Naive thymus-derived CD4-positive, alpha-beta T cell (primary cell): ENCODE measurements at regions of chr5 and their contacts with region 1.

Region 1: DNA sequence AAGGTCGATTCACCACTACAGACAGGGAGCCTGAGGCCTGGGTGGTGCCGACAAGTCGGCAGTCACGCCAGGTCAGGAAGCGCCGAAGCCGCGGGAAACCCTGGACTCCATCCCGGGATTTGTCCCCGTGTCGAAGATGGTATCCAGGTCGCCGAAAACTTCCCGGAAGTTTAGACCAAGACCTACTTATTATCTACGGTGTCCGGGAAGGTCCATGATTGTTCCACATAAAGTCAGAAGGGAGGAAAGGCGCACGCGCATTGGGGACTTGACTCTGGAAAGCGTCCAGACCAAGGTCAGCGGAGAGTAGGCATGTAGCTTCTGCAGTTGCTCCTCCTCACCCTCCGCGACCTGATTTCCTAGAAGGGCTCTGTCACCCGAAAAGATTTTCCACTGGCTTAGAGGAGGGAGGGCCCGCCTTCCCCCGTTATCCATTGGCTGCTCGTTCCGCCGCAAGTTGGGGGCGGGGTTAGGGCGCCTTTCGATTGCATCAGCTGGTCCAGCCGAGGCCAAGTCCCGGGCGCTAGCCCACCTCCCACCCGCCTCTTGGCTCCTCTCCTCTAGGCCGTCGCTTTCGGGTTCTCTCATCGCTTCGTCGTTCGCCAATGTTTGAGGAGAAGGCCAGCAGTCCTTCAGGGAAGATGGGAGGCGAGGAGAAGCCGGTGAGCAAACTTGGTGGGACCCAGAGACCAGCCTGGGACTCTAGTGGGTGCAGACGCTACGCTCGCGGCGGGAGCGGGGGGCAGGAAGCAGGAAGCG is at the start of gene TARS1:
- DNase-seq: peak; percentile 80 to 94 (median 91)
- ATAC-seq: peak; percentile 94
- H3K4me3 ChIP-seq: peak within 1 kb of the TSS; percentile 96
- H3K4me3 Mint-ChIP-seq: no peak within 1 kb of the TSS
- H3K27ac ChIP-seq: peak within 1 kb of the TSS; percentile 90
- H3K27ac Mint-ChIP-seq: no peak within 1 kb of the TSS
- H3K4me1 ChIP-seq: peaks cover 15 to 16% of the 10 kb centered on the region in 2 donors
- H3K4me1 Mint-ChIP-seq: peaks cover 16 to 35% (median 29%) of the 10 kb centered on the region in 7 donors
- H3K27me3 ChIP-seq: no peaks in the 10 kb centered on the region
- H3K27me3 Mint-ChIP-seq: no peaks in the 10 kb centered on the region
- total RNA-seq, gene TARS1: 29.7 to 153 (median 87.0) TPM

Region 2: DNA sequence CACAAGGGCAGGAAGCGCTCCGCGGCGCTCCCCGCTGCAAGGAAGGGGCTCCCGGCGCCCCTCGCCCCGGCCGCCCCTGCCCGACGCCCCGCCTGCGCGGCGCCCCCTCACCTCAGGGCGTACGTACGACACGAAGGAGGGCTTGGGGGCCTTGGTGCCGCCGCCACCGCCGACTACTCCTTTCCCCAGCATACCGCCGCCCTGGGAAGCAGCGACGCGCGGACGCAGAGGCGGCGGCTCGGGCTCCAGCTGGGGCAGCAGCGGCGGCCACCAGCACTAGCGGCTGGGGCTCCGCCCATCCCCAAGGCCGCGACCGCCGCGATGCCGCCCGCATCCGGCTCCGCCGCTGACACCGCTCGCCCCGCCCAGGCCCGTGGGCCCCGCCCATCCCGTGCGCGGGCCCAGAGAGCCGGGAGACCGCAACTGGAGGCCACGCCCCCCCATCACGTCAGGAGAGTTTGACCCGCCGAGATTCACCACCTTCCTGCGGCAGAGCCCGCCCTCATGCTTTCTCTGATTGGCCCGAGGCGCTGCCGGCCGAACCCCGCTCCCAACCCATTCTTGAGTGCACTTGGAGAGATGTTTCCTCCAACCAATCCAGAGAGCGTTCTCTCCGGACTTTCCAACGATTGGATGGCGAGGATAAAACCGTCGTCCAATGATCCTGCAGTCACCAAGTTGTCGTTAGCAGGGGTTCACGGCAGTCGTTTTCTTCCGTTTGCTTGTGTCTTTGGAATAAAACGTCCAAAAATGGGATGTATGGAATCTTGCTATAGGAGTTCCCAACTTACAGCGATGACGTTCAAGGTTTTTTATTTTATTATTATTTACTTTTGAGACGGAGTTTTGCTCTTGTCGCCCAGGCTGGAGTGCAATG is 1127.8 kb before region 1 on chr5 and contains the start of gene MTMR12:
- CTCF ChIA-PET with region 1: no interaction called
- POLR2A ChIA-PET with region 1: no interaction called
- intact Hi-C with region 1: loop called (anchors 1 to 2 kb)
- DNase-seq: peak; percentile 99 to 100 (median 100)
- ATAC-seq: peak; percentile 96
- H3K4me3 ChIP-seq: peak within 1 kb of the TSS; percentile 72
- H3K4me3 Mint-ChIP-seq: peak within 1 kb of the TSS; percentile 89 to 98 (median 92)
- H3K27ac ChIP-seq: peak within 1 kb of the TSS; percentile 79
- H3K27ac Mint-ChIP-seq: peak within 1 kb of the TSS; percentile 88 to 98 (median 95)
- H3K4me1 ChIP-seq: peaks cover 9 to 14% of the 10 kb centered on the region in 2 donors
- H3K4me1 Mint-ChIP-seq: peaks cover 30 to 43% (median 38%) of the 10 kb centered on the region in 7 donors
- H3K27me3 ChIP-seq: no peaks in the 10 kb centered on the region
- H3K27me3 Mint-ChIP-seq: no peaks in the 10 kb centered on the region
- total RNA-seq, gene MTMR12: 19.0 to 28.2 (median 24.0) TPM

Region 3: DNA sequence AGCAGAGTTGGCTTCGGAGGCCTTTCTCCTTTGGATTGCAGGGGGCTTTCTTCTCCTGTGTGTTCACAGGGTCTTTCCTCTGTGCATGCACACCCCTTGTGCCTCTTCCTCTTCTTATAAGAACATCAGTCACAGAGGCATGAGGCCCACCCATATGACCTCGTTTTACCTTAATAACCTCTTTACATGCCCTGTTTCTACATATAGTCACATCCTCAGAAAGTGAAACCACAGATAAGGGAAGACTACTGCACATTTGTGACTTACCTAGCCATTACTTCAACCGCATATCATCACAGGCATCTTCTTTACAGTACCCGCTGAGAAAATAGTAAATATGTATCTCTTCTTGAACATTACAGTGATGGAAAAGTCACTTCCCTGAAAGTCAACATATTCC is 204.8 kb before region 1 on chr5:
- CTCF ChIA-PET with region 1: no interaction called
- POLR2A ChIA-PET with region 1: no interaction called
- intact Hi-C with region 1: loop called in 1 of 2 experiments (anchors 10 kb)
- DNase-seq: no peak
- ATAC-seq: no peak
- H3K4me3 ChIP-seq: no peak overlapping the region
- H3K4me3 Mint-ChIP-seq: peak overlapping the region in 6 of 10 donors; percentile 19 to 57 (median 40)
- H3K27ac ChIP-seq: no peak overlapping the region
- H3K27ac Mint-ChIP-seq: peak overlapping the region in 2 of 9 donors; percentile 2 to 63
- H3K4me1 ChIP-seq: no peaks in the 10 kb centered on the region
- H3K4me1 Mint-ChIP-seq: peaks cover 0 to 34% (median 5%) of the 10 kb centered on the region in 7 donors
- H3K27me3 ChIP-seq: no peaks in the 10 kb centered on the region
- H3K27me3 Mint-ChIP-seq: peaks cover 0 to 4% (median 0%) of the 10 kb centered on the region in 5 donors

Region 4: GRCh38 chr5:33840927-33841547 is 400.4 kb after region 1 on chr5:
- CTCF ChIA-PET with region 1: no interaction called
- POLR2A ChIA-PET with region 1: no interaction called
- intact Hi-C with region 1: loop called in 1 of 2 experiments (anchors 10 kb)
- DNase-seq: peak in 4 of 9 donors; percentile 3 to 29 (median 10)
- ATAC-seq: peak; percentile 29
- H3K4me3 ChIP-seq: no peak overlapping the region
- H3K4me3 Mint-ChIP-seq: peak overlapping the region in 8 of 10 donors; percentile 1 to 76 (median 55)
- H3K27ac ChIP-seq: no peak overlapping the region
- H3K27ac Mint-ChIP-seq: peak overlapping the region in 8 of 9 donors; percentile 1 to 78 (median 60)
- H3K4me1 ChIP-seq: peaks cover 9 to 10% of the 10 kb centered on the region in 2 donors
- H3K4me1 Mint-ChIP-seq: peaks cover 6 to 43% (median 18%) of the 10 kb centered on the region in 7 donors
- H3K27me3 ChIP-seq: no peaks in the 10 kb centered on the region
- H3K27me3 Mint-ChIP-seq: peaks cover 0 to 17% (median 3%) of the 10 kb centered on the region in 5 donors

Region 5: DNA sequence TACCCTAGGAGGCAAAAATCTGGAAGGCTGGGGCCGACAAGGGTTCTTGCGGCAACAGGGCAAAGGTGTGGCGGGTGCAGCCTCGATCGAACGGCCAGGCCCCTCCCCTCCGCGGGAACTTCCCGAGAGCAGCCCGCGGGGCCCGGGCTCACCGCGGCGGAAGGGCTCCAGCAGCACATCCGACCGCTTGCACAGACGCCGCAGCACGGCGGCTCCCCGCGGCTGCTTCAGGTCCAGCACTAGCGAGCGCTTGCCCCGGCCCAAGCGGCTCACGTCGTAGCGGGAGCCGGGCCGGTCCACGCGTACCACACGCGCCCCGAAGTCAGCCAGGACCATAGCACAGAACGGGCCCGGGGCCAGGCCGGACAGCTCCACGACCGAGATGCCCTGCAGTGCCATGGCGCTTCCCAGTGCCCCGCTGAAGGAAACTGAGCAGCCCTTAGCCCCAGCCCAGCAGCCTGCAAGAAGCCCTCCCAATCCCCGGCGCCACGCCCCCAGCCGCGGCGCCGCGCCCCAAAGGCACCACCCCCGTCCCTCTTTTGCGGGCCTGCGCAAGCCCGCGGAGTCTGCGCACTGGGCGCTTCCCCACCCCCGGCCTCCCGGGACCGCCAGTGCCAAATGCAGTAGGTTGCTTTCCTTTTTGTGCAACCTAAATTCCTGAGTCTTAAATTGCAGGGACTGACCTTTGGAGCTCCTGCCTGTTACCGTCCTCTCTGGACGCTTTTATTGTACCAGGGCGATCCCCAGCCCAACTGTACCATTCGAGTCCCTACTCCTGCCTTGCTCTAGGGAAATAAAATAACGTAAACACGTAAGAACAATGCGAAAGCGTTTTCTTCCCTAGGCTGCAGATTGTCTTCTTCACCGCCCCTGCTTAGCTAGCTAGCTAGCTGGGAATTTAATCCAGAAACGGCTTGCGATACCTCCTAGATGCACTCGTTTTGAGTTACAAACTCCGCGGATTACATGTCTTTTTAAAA is 567.2 kb after region 1 on chr5 and contains the start of gene AMACR:
- CTCF ChIA-PET with region 1: no interaction called
- POLR2A ChIA-PET with region 1: interaction called, 8 read pairs
- intact Hi-C with region 1: loop called (anchors 1 kb)
- DNase-seq: peak; percentile 73 to 91 (median 81)
- ATAC-seq: peak; percentile 95
- H3K4me3 ChIP-seq: peak within 1 kb of the TSS; percentile 85
- H3K4me3 Mint-ChIP-seq: peak within 1 kb of the TSS; percentile 79 to 98 (median 94)
- H3K27ac ChIP-seq: peak within 1 kb of the TSS; percentile 83
- H3K27ac Mint-ChIP-seq: peak within 1 kb of the TSS; percentile 87 to 97 (median 96)
- H3K4me1 ChIP-seq: peaks cover 9 to 18% of the 10 kb centered on the region in 2 donors
- H3K4me1 Mint-ChIP-seq: peaks cover 23 to 39% (median 32%) of the 10 kb centered on the region in 7 donors
- H3K27me3 ChIP-seq: no peaks in the 10 kb centered on the region
- H3K27me3 Mint-ChIP-seq: no peaks in the 10 kb centered on the region
- total RNA-seq, gene AMACR: 2.7 to 8.3 (median 7.3) TPM

Region 6: DNA sequence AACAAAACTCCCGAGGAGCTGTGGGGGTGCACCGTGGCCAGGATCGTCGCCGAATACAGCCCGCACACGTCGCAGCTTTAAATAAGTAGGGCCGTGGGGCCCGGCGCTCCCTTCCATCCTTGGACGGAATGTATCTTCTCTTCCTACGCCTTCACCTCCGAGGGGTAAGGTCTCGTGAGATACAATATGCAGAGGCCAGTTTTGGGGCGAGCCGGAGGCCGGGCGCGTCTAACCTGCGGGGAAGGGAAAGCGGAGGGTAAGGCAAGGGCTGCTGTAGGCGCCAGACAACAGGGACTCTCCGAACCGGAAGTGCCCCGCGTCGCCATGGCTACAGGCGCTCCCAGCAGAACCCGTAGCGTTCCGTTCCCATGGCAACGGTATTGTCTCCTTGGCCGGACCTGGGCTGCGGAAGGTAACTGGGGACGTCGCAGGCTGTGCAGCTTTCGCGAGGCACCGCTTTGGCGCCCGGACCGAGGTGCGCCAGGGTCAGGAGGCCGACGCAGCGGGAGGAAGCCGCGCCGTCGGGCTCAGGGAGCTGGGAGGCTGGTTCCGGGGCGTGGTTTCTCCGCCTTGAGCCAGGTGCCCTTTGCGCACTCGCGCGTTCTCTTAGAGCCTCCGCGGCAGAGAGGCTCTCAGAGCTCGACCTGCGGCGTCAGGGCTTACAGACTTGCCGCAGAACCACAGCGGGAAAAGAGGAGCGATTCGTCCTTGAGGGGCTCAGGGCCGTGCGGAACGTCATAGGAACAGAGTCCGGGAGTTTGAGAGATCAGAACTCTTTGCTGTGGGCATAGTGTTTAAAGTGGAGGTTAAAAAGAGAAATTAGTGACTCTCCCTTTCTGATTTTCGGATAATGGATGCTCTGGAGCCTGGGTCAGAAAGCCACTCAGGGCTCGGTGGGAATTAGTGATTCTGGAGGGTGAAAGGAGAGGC is 1398.4 kb after region 1 on chr5 and contains the start of gene TTC23L:
- CTCF ChIA-PET with region 1: no interaction called
- POLR2A ChIA-PET with region 1: no interaction called
- intact Hi-C with region 1: loop called (anchors 1 to 2 kb)
- DNase-seq: peak; percentile 82 to 95 (median 90)
- ATAC-seq: peak; percentile 94
- H3K4me3 ChIP-seq: peak within 1 kb of the TSS; percentile 85
- H3K4me3 Mint-ChIP-seq: peak within 1 kb of the TSS; percentile 79 to 97 (median 92)
- H3K27ac ChIP-seq: peak within 1 kb of the TSS; percentile 78
- H3K27ac Mint-ChIP-seq: peak within 1 kb of the TSS; percentile 83 to 99 (median 94)
- H3K4me1 ChIP-seq: peaks cover 0 to 4% of the 10 kb centered on the region in 2 donors
- H3K4me1 Mint-ChIP-seq: peaks cover 6 to 16% (median 10%) of the 10 kb centered on the region in 7 donors
- H3K27me3 ChIP-seq: no peaks in the 10 kb centered on the region
- H3K27me3 Mint-ChIP-seq: peaks cover 0 to 9% (median 0%) of the 10 kb centered on the region in 5 donors
- total RNA-seq, gene TTC23L: 0.57 to 1.9 (median 1.00) TPM in 3 of 5 experiments, not detected in the others